ENCODE measurements at regions of chr5 and their contacts with region 1.

Region 1: DNA sequence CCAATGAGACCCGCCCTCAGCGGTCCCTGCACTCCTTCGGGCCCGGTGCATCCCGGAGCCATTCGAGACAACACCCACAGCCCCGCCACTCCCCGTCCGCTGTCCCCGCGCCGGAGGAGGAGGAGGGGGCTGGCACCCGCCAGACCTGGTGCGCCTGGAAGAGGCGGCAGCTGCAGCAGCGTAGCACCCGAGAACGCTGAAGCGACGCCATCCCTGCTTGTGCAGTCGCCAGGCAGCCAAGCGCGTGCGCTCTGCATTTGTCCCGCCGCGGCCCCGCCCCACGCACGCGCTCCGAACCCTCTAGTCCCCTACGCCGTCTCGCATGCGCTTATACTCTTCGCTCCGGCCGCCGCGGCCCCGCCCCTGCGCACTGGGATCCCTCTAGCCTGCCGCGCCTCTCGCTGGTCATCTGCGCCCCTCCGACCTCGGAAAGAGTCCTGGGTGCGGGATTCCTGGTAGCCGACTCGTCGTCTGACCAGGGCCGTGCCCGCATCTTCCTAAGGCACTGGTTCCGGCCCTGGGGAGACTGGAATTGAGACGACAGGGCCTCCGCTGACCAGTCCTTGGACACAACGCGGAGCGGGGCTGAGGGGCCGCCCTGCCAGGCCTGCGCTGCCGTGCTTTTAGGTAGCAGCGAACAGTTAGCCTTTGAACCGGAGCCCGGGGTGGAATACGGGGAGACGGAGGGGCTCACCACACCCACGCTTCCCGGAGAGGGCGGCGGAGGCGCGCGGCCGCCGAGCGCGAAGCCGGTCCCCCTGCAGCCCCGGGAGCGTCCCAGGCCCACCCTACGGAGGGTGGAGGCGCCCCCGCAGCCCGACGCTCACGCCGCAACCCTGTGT is at the start of gene MRNIP:
- DNase-seq: peak; percentile 94
- H3K4me3 Mint-ChIP-seq: peak within 1 kb of the TSS; percentile 79
- H3K27ac Mint-ChIP-seq: peak within 1 kb of the TSS; percentile 61
- H3K4me1 Mint-ChIP-seq: peaks cover 16% of the 10 kb centered on the region
- H3K27me3 Mint-ChIP-seq: no peaks in the 10 kb centered on the region
- total RNA-seq, gene MRNIP: 19.8 to 24.9 TPM

Region 2: DNA sequence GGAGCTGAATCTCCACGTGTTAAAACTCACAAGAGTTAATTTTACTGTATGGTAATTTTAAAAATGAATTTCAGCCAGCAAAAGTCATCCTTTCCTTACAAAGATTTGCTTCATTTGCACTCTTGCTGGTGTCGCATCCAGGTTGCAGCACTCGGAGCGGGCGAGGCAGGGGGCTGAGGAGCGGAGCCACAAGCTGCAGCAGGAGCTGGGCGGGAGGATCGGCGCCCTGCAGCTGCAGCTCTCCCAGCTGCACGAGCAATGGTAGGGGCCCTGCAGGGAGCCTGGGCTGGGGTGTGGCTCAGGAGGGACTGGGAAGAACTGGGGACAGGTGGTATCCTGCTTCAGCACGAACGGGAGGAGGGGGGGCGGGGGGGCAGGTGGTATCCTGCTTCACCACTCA is 262.4 kb before region 1 on chr5:
- CTCF ChIA-PET with region 1: no interaction called
- POLR2A ChIA-PET with region 1: no interaction called
- intact Hi-C with region 1: no loop called
- DNase-seq: no peak
- H3K4me3 Mint-ChIP-seq: no peak overlapping the region
- H3K27ac Mint-ChIP-seq: no peak overlapping the region
- H3K4me1 Mint-ChIP-seq: no peaks in the 10 kb centered on the region
- H3K27me3 Mint-ChIP-seq: no peaks in the 10 kb centered on the region

Region 3: GRCh38 chr5:179821581-179822432 is 37.0 kb before region 1 on chr5:
- CTCF ChIA-PET with region 1: no interaction called
- POLR2A ChIA-PET with region 1: interaction called, 6 read pairs
- intact Hi-C with region 1: loop called (anchors 1 kb)
- DNase-seq: peak; percentile 92
- H3K4me3 Mint-ChIP-seq: peak overlapping the region; percentile 90
- H3K27ac Mint-ChIP-seq: peak overlapping the region; percentile 95
- H3K4me1 Mint-ChIP-seq: peaks cover 49% of the 10 kb centered on the region
- H3K27me3 Mint-ChIP-seq: no peaks in the 10 kb centered on the region

Region 4: DNA sequence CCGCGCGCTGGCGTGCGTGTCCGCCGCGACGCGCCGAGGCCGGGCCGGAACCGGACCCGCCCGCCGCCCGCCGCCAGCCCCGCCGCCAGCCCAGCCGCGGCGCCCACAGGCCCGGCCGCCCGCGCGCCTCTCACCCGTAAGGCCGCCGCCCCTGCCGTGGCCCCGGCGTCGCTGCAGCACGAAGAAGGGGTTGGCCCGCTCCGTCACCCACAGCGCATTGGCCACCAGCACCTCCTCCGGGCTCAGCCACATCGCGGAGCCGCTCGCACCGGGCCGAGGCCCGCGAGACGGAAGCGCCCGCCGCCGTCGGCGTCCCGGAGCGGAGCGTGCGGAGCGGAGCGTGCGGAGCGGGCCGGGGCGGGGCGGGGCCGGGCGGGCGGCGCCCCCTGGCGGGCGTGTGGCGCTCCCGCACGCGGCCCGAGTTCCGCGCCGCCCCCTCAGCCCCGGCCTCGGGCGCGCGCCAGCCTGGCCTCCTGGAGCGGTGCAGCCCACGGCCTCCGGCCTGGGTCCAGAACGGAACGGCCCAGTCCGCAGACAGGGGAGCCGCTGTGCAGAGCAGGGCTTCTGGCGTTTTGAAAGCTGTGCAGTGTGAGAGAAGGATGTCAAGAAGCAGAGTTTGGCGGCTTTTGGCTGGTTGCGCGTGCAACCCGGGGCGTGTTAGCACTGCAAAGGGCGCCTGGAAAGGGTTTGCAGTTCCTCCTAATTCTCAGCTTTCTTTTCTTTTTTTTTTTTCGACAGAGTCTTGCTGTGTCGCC is 48.9 kb after region 1 on chr5 and contains the start of gene TBC1D9B:
- CTCF ChIA-PET with region 1: interaction called, 3 read pairs
- POLR2A ChIA-PET with region 1: no interaction called
- intact Hi-C with region 1: loop called (anchors 5 kb)
- DNase-seq: peak; percentile 71
- H3K4me3 Mint-ChIP-seq: peak within 1 kb of the TSS; percentile 88
- H3K27ac Mint-ChIP-seq: peak within 1 kb of the TSS; percentile 69
- H3K4me1 Mint-ChIP-seq: peaks cover 14% of the 10 kb centered on the region
- H3K27me3 Mint-ChIP-seq: no peaks in the 10 kb centered on the region
- total RNA-seq, gene TBC1D9B: 59.0 to 62.8 TPM